Activated naive CD4-positive, alpha-beta T cell treated with anti-CD3 and anti-CD28 coated beads for 36 hours (primary cell): ENCODE measurements at regions of chr1 and their contacts with region 1.

Region 1: GRCh38 chr1:246566128-246566812 is at the starts of genes CNST and TFB2M:
- DNase-seq: peak; percentile 96
- H3K4me3 Mint-ChIP-seq: peak within 1 kb of the TSS; percentile 96
- H3K27ac Mint-ChIP-seq: peak within 1 kb of the TSS; percentile 94
- H3K4me1 Mint-ChIP-seq: peaks cover 43% of the 10 kb centered on the region
- H3K27me3 Mint-ChIP-seq: no peaks in the 10 kb centered on the region
- total RNA-seq, gene CNST: 22.1 to 25.3 TPM
- total RNA-seq, gene TFB2M: 10.8 to 11.1 TPM

Region 2: GRCh38 chr1:244835276-244836134 is 1730.8 kb before region 1 on chr1 and contains the start of gene COX20:
- CTCF ChIA-PET with region 1: no interaction called
- intact Hi-C with region 1: loop called (anchors 2 kb)
- DNase-seq: peak; percentile 85
- H3K4me3 Mint-ChIP-seq: peak within 1 kb of the TSS; percentile 94
- H3K27ac Mint-ChIP-seq: peak within 1 kb of the TSS; percentile 99
- H3K4me1 Mint-ChIP-seq: peaks cover 38% of the 10 kb centered on the region
- H3K27me3 Mint-ChIP-seq: no peaks in the 10 kb centered on the region
- total RNA-seq, gene COX20: 21.4 to 24.2 TPM

Region 3: DNA sequence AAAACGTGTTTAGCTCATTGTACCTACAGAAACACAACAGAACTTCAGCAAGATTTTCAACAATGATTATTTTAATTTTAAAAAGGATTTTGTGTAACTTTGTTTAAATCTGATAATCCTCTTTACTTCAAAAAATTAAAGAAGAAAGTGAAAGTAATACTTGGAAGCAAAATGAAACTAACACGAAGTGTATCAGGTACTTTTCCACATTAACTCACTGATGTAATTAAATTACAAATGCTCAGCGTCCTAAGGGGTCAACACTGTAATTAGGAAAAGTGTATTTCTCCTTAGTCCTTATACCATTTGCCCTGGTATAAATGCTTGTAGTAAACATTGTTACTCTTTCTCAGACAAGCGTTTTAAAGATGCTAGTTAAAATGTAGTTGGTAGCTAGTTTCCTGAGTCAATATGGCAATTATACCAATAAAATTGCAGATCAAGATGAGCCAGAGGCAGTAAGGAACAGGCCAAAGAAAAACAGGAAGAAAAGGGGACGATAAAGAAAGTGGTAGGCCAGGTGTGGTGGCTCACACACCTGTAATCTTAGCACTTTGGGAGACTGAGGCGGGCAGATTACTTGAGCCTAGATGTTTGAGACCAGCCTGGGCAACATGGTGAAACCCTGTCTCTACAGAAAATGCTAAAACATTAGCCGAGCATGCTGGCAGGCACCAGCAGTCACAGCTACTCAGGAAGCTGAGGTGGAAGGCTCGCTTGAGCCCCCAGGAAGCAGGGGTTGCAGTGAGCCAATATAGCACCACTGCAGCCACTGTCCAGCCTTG is 612.2 kb before region 1 on chr1:
- CTCF ChIA-PET with region 1: no interaction called
- intact Hi-C with region 1: loop called (anchors 2 kb)
- DNase-seq: peak; percentile 17
- H3K4me3 Mint-ChIP-seq: peak overlapping the region; percentile 54
- H3K27ac Mint-ChIP-seq: peak overlapping the region; percentile 87
- H3K4me1 Mint-ChIP-seq: peaks cover 27% of the 10 kb centered on the region
- H3K27me3 Mint-ChIP-seq: no peaks in the 10 kb centered on the region

Region 4: GRCh38 chr1:246544001-246544400 is 22.3 kb before region 1 on chr1:
- CTCF ChIA-PET with region 1: interaction called, 5 read pairs
- intact Hi-C with region 1: loop called (anchors 1 kb)
- DNase-seq: no peak
- H3K4me3 Mint-ChIP-seq: no peak overlapping the region
- H3K27ac Mint-ChIP-seq: no peak overlapping the region
- H3K4me1 Mint-ChIP-seq: no peaks in the 10 kb centered on the region
- H3K27me3 Mint-ChIP-seq: no peaks in the 10 kb centered on the region

Region 5: GRCh38 chr1:246629030-246629429 is 62.8 kb after region 1 on chr1:
- CTCF ChIA-PET with region 1: interaction called, 5 read pairs
- intact Hi-C with region 1: loop called (anchors 2 kb)
- DNase-seq: no peak
- H3K4me3 Mint-ChIP-seq: no peak overlapping the region
- H3K27ac Mint-ChIP-seq: peak overlapping the region; percentile 31
- H3K4me1 Mint-ChIP-seq: peaks cover 18% of the 10 kb centered on the region
- H3K27me3 Mint-ChIP-seq: no peaks in the 10 kb centered on the region

Region 6: DNA sequence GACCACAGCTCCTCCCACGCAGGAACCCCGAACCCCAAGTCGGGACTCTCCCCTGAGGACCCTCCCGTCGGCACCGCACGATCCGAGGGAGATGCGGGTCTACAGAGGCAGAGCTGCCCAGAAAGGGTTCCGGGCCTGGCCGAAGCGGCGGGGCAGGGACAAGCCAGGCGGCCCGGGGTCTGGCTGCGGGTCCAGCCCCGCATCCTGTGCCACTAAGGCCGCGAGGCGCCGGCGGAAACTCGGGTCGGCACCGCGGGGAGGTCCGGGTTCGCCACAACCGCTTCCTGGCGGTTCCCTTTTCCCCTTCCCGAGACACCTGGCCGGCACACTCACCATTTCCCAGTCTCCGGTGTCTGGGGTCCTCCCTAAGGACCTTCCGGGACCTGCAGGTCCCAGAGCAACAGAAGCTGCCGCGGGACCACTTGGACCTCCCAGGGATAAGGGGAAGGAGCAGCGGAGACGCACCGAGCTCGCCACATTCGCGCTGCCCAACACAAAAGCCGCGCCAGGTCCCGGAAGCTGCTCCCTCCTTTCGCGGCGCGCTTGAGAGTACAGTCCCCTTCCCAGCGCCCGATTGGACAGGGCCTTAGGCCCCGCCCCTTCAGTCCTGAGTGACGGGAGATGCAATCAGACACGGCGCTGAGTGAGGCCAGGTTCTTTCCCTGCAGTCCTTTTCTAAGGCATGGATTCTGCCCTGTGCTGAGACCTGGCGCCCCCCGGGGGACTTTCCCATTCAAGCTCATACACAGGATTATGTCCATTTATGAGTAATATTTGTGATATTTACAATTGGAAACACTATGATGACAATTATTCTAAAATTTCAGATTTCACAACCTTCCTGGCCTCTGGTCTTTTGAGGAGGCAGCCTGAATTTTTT is 512.2 kb after region 1 on chr1 and contains the start of gene ZNF670:
- CTCF ChIA-PET with region 1: no interaction called
- intact Hi-C with region 1: loop called (anchors 1 kb)
- DNase-seq: peak; percentile 98
- H3K4me3 Mint-ChIP-seq: peak within 1 kb of the TSS; percentile 91
- H3K27ac Mint-ChIP-seq: peak within 1 kb of the TSS; percentile 90
- H3K4me1 Mint-ChIP-seq: peaks cover 22% of the 10 kb centered on the region
- H3K27me3 Mint-ChIP-seq: peaks cover 6% of the 10 kb centered on the region
- total RNA-seq, gene ZNF670: 4.1 to 4.3 TPM